GM23248 (cell line): ENCODE measurements at regions of chr9 and their contacts with region 1.

Region 1: GRCh38 chr9:27033823-27034403 is 28.4 kb upstream of the LRRC19 start:
- DNase-seq: peak; percentile 54
- H3K4me3 ChIP-seq: no peak overlapping the region
- H3K27ac ChIP-seq: no peak overlapping the region
- H3K4me1 ChIP-seq: no peaks in the 10 kb centered on the region
- H3K27me3 ChIP-seq: no peaks in the 10 kb centered on the region

Region 2: DNA sequence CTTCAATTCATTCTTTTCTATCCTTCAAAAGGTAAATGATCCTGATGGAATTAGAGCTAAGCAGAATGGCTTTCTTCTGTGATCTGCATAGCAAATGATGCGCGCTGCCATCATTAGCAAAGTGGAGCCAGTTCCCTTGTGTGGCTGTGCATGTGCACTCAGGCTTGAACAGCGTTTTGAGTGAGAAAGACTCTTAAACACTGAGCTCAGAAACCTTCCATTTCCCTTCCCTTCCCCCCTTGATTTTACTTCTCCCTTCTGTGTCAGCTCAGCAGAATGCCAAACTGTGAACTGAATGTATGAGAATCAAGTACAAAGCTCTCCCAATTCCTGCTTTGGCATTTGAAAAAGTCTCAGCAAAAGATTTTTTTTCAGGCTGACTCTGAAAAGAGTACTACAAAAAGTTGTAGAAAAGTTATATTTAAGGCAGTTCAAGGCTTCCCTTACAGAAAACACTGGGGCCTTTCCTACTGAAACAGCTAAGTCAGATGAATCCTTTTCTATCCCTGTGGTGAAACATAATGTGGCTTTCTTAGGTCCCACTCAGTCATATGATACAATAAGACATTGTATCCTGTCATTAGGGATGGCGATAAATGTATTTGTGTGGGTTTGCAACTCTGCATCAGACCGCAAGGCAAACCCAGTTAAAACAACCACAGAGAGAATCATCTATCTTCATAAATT is 364.1 kb before region 1 on chr9:
- in situ Hi-C with region 1: no loop called
- DNase-seq: no peak
- H3K4me3 ChIP-seq: no peak overlapping the region
- H3K27ac ChIP-seq: no peak overlapping the region
- H3K4me1 ChIP-seq: no peaks in the 10 kb centered on the region
- H3K27me3 ChIP-seq: no peaks in the 10 kb centered on the region

Region 3: DNA sequence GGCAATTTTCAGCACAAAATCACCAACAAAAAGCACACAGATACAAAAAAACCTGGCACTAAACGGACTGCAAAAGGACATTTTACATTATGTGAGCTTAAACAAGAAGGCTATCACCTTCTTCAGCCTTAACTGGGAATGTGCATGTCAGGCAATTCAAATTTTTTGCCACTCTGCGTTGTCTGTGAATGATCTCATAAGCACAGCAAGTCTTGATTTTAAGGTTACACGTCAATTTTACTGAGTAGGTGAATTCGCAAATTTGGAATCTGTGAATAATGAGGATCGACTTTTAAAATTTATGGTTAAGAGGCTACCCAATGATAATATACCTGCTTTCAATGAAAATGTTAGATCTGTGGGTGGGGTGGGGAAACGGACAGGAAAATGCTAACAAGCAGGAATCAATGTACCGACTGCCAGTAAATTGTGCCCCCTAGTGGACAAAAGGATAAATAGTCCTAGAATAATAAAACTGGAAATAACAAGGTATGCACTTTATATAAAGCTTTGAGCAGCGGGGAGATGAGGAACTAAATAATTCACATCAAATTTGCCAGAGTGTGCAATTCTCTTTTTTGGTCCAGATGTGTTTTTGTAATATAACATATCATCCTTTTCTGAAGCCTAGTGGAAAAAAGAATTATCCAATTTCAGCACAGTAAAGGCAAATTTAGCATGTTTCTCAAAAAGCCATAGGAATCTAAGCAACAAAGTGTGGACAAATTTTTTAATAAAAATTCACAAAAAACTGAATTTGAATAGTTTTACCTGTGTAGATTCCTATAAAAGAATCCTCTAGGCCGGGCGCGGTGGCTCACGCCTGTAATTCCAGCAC is 242.5 kb after region 1 on chr9:
- in situ Hi-C with region 1: loop called (anchors 5 kb)
- DNase-seq: peak; percentile 67
- H3K4me3 ChIP-seq: peak overlapping the region; percentile 69
- H3K27ac ChIP-seq: no peak overlapping the region
- H3K4me1 ChIP-seq: peaks cover 7% of the 10 kb centered on the region; the same call in 1 of the 2 replicates
- H3K27me3 ChIP-seq: no peaks in the 10 kb centered on the region; the same call in 1 of the 2 replicates

Region 4: GRCh38 chr9:27529316-27530278 is 495.7 kb after region 1 on chr9 and contains the start of gene MOB3B:
- in situ Hi-C with region 1: loop called (anchors 25 kb)
- DNase-seq: peak; percentile 74
- H3K4me3 ChIP-seq: peak within 1 kb of the TSS; percentile 74
- H3K27ac ChIP-seq: no peak within 1 kb of the TSS
- H3K4me1 ChIP-seq: no peaks in the 10 kb centered on the region
- H3K27me3 ChIP-seq: peaks cover 21% of the 10 kb centered on the region; the same call in 1 of the 2 replicates
- total RNA-seq, gene MOB3B: not detected in 2 replicates

Region 5: DNA sequence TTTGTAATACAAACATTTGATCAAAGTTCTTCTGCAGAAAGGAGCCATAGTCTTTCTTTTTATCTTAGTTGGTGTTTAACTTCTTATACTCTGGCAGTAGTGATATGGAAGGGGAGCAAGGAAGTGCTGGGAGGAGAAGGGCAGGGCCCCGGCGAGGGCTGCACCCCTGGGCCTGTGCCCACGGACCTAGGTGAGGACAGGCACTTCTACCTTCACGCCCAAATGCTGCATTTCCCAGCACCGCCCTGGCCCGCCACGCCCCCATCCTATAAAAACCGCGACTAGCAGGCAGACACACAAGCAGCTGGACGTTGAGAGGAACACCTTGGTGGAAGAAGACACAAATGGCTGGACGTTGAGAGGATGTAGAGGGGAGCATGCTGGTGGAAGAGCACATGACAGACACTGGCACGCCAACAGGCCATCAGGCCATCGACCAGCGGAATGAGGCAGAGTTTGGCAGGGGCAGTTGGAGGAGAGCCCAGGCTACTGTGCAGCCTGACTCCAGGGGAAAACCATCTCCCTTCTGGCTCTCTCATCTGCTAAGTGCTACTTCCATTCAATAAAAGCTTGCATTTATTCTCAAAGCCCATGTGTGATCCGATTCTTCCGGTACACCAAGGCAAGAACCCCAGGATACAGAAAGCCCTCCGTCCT is 620.8 kb after region 1 on chr9:
- in situ Hi-C with region 1: no loop called
- DNase-seq: no peak
- H3K4me3 ChIP-seq: no peak overlapping the region
- H3K27ac ChIP-seq: no peak overlapping the region
- H3K4me1 ChIP-seq: no peaks in the 10 kb centered on the region
- H3K27me3 ChIP-seq: no peaks in the 10 kb centered on the region